GM12878 (cell line): ENCODE measurements at regions of chr3 and their contacts with region 1.

Region 1: DNA sequence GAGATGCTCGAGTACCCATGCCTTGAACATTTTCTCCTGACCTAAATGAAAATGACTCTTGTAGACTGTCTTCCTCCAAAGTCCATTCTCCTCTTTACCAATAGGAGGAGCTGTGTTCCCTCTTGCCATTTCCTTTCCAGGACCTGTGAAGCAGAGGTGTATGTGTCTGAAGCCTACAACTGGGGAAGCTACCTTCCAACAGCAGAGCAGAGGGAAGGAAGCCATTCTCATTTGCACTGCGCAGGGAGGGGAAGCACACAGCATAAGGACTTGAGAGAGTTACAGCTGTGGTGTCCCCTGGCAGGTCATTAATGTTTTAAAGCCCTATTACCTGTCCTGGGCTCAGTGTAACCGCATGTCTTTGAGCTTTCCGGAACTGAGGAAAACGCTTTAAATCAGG is 38.7 kb downstream of the HSPBAP1 start:
- DNase-seq: peak; percentile 33
- ATAC-seq: peak; percentile 98
- H3K4me3 ChIP-seq: no peak overlapping the region
- H3K27ac ChIP-seq: no peak overlapping the region
- H3K4me1 ChIP-seq: no peaks in the 10 kb centered on the region
- H3K27me3 ChIP-seq: no peaks in the 10 kb centered on the region
- CTCF ChIP-seq: peak; percentile 86 to 93 (median 88)
- EP300 ChIP-seq: no peak
- POLR2A ChIP-seq: no peak
- RAD21 ChIP-seq: peak; percentile 92

Region 2: DNA sequence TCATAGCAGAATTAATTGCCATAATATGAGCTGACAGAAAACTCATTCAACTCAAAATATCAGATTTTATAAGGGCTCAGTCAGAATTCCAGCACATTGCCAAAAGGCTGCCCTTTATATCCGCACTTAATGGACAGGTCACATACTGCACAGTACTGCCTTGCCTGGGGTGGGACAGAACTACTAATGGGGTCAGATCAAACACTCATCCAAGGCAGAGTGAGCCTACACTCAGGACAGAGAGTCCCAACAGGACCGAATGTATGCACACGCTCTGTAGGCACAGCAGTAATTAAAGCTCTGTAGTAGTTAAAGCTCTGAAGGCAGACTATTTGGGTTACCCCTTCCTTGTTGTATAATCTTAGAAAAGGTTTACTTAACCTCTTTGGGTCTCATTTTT is 11.5 kb after region 1 on chr3:
- CTCF ChIA-PET with region 1: interaction called, 23 read pairs
- POLR2A ChIA-PET with region 1: interaction called, 4 read pairs
- RAD21 ChIA-PET with region 1: no interaction called
- SMC1A ChIA-PET with region 1: interaction called, 5 read pairs
- in situ Hi-C with region 1: no loop called
- intact Hi-C with region 1: no loop called
- DNase-seq: no peak
- ATAC-seq: no peak
- H3K4me3 ChIP-seq: no peak overlapping the region
- H3K27ac ChIP-seq: no peak overlapping the region
- H3K4me1 ChIP-seq: no peaks in the 10 kb centered on the region
- H3K27me3 ChIP-seq: no peaks in the 10 kb centered on the region
- CTCF ChIP-seq: no peak
- EP300 ChIP-seq: no peak
- POLR2A ChIP-seq: no peak
- RAD21 ChIP-seq: no peak

Region 3: GRCh38 chr3:122774564-122774963 is 19.6 kb after region 1 on chr3:
- CTCF ChIA-PET with region 1: interaction called, 23 read pairs
- POLR2A ChIA-PET with region 1: interaction called, 4 read pairs
- RAD21 ChIA-PET with region 1: interaction called, 10 read pairs
- SMC1A ChIA-PET with region 1: interaction called, 10 read pairs
- in situ Hi-C with region 1: no loop called
- intact Hi-C with region 1: no loop called
- DNase-seq: no peak
- ATAC-seq: peak; percentile 32
- H3K4me3 ChIP-seq: no peak overlapping the region
- H3K27ac ChIP-seq: peak overlapping the region; percentile 63
- H3K4me1 ChIP-seq: peaks cover 16% of the 10 kb centered on the region
- H3K27me3 ChIP-seq: no peaks in the 10 kb centered on the region
- CTCF ChIP-seq: no peak
- EP300 ChIP-seq: no peak
- POLR2A ChIP-seq: no peak
- RAD21 ChIP-seq: no peak

Region 4: GRCh38 chr3:122793568-122794416 is 38.9 kb after region 1 on chr3 and contains the start of gene HSPBAP1:
- CTCF ChIA-PET with region 1: interaction called, 11 read pairs
- POLR2A ChIA-PET with region 1: no interaction called
- RAD21 ChIA-PET with region 1: interaction called, 3 read pairs
- SMC1A ChIA-PET with region 1: interaction called, 5 read pairs
- in situ Hi-C with region 1: no loop called
- intact Hi-C with region 1: no loop called
- DNase-seq: peak; percentile 68
- ATAC-seq: peak; percentile 76
- H3K4me3 ChIP-seq: peak within 1 kb of the TSS; percentile 77
- H3K27ac ChIP-seq: peak within 1 kb of the TSS; percentile 47
- H3K4me1 ChIP-seq: no peaks in the 10 kb centered on the region
- H3K27me3 ChIP-seq: no peaks in the 10 kb centered on the region
- CTCF ChIP-seq: no peak
- EP300 ChIP-seq: peak in 1 of 2 experiments; percentile 44; a peak in 1 of 4 replicates
- POLR2A ChIP-seq: peak; percentile 83
- RAD21 ChIP-seq: no peak
- polyA plus RNA-seq, gene HSPBAP1: 3.2 to 3.5 TPM

Region 5: DNA sequence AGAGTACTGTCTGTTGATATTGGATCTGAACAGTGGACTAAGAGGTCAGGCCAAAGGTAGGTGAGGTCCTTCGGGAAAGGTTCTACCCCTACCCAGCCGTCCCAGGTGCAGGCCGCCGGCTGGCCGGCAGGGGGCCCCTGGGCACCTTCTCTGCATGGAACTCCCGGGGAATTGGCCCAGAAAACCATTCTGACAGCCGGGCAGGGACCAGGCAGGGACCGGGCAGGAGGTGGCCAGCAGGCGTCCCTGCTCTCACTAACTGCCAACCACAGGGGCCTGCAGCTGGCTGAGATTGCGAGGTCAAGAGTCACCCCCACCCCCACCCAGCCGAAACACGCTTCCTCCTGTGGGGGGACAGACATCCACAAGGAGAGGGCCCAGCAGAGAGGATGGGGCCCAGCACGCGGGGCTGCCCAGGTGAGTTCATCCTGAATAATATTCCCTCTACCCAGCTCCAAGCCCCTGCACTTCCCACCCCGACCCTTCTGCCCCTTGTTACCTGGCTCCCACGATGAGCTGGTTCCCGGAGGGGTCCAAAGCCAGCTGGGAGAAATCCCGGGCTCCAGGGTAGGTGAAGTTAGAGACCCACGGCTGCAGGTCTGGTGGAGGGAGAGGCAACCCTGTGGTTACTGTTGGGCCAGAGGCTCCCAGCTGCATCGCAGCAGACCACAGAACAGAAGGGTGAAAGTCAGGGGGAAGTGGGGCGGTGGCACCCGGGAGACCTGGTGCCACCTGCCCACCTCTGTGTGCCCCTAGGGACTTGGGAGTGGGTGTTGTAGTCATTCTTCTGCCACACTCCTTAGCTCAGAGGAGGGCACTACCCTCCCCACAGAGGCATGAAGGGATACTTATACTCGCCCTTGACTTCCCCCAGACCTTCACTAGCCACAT is 188.3 kb after region 1 on chr3:
- CTCF ChIA-PET with region 1: interaction called, 11 read pairs
- POLR2A ChIA-PET with region 1: no interaction called
- RAD21 ChIA-PET with region 1: interaction called, 5 read pairs
- SMC1A ChIA-PET with region 1: interaction called, 6 read pairs
- in situ Hi-C with region 1: no loop called
- intact Hi-C with region 1: loop called (anchors 10 kb)
- DNase-seq: no peak
- ATAC-seq: peak; percentile 88
- H3K4me3 ChIP-seq: no peak overlapping the region
- H3K27ac ChIP-seq: no peak overlapping the region
- H3K4me1 ChIP-seq: no peaks in the 10 kb centered on the region
- H3K27me3 ChIP-seq: peaks cover 0 to 2% of the 10 kb centered on the region in 2 experiments; a peak in 2 of 4 replicates
- CTCF ChIP-seq: peak; percentile 67 to 94 (median 89)
- EP300 ChIP-seq: no peak
- POLR2A ChIP-seq: no peak
- RAD21 ChIP-seq: peak; percentile 72

Region 6: DNA sequence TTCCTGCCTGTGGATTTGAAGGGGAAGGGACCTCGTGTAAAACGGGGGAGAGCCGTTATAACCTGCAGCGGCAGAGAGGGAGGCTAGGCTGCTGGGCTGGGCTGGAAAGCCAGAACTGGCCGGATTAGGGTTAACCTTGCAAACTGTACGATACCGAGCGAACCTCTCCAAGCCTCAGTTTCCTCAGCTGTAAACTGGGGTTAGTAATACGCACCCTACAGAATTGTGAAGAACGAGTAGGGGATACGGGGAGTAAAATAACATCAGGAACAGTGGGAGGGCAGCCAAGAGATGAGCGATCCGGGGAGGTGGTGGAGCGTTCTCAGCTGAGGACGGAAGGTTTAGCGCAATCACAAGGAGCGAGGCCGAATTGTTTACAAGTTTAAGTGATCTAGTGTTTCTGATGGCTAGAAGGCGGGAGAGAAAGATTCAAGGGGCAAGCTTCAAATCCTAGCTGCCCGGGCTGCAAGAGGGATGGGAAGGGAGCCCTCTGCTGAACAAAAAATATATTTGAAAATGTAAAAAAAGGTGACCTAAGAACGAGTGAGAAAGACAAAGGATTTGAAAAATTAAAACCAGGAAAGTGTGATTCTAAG is 273.4 kb after region 1 on chr3:
- CTCF ChIA-PET with region 1: interaction called, 9 read pairs
- POLR2A ChIA-PET with region 1: no interaction called
- RAD21 ChIA-PET with region 1: interaction called, 6 read pairs
- SMC1A ChIA-PET with region 1: interaction called, 9 read pairs
- in situ Hi-C with region 1: loop called (anchors 5 kb)
- intact Hi-C with region 1: loop called (anchors 2 kb)
- DNase-seq: no peak
- ATAC-seq: peak; percentile 61
- H3K4me3 ChIP-seq: peak overlapping the region; percentile 50; the same call in 1 of the 2 replicates
- H3K27ac ChIP-seq: no peak overlapping the region
- H3K4me1 ChIP-seq: peaks cover 6% of the 10 kb centered on the region
- H3K27me3 ChIP-seq: peaks cover 18 to 33% of the 10 kb centered on the region in 2 experiments
- CTCF ChIP-seq: peak; percentile 35 to 67 (median 37); a peak in 4 of 6 replicates
- EP300 ChIP-seq: no peak
- POLR2A ChIP-seq: no peak
- RAD21 ChIP-seq: peak; percentile 73